ENCODE measurements at regions of chr10 and their contacts with region 1.

Region 1: GRCh38 chr10:12129222-12130111 is at the start of gene SEC61A2:
- DNase-seq: peak; percentile 71 to 96
- H3K4me3 ChIP-seq: peak within 1 kb of the TSS; percentile 67 to 97
- H3K27ac ChIP-seq: peak within 1 kb of the TSS; percentile 78 to 84
- H3K4me1 ChIP-seq: peaks cover 0 to 2% of the 10 kb centered on the region in 2 donors
- H3K27me3 ChIP-seq: no peaks in the 10 kb centered on the region
- CTCF ChIP-seq: no peak
- total RNA-seq, gene SEC61A2: 1.9 TPM

Region 2: GRCh38 chr10:12042797-12043651 is 86.4 kb before region 1 on chr10 and contains the start of gene UPF2:
- intact Hi-C with region 1: loop called (anchors 1 kb)
- DNase-seq: peak; percentile 95 to 99
- H3K4me3 ChIP-seq: peak within 1 kb of the TSS; percentile 91 to 95
- H3K27ac ChIP-seq: peak within 1 kb of the TSS; percentile 91 to 93
- H3K4me1 ChIP-seq: peaks cover 0 to 2% of the 10 kb centered on the region in 2 donors
- H3K27me3 ChIP-seq: no peaks in the 10 kb centered on the region
- CTCF ChIP-seq: no peak
- total RNA-seq, gene UPF2: 7.9 TPM

Region 3: GRCh38 chr10:12068449-12069269 is 60.8 kb before region 1 on chr10 and contains the start of gene DHTKD1:
- intact Hi-C with region 1: loop called (anchors 1 kb)
- DNase-seq: peak; percentile 93 to 99
- H3K4me3 ChIP-seq: peak within 1 kb of the TSS; percentile 72 to 90
- H3K27ac ChIP-seq: peak within 1 kb of the TSS; percentile 72 to 85
- H3K4me1 ChIP-seq: peaks cover 0 to 3% of the 10 kb centered on the region in 2 donors
- H3K27me3 ChIP-seq: no peaks in the 10 kb centered on the region
- CTCF ChIP-seq: peak; percentile 21 to 63 (median 43)
- total RNA-seq, gene DHTKD1: 12.6 TPM

Region 4: GRCh38 chr10:12195603-12196506 is 66.4 kb after region 1 on chr10 and contains the starts of genes CDC123 and NUDT5:
- intact Hi-C with region 1: loop called (anchors 2 kb)
- DNase-seq: peak; percentile 36 to 91
- H3K4me3 ChIP-seq: peak within 1 kb of the TSS; percentile 71 to 89
- H3K27ac ChIP-seq: peak within 1 kb of the TSS; percentile 88 to 92
- H3K4me1 ChIP-seq: peaks cover 9 to 27% of the 10 kb centered on the region in 2 donors
- H3K27me3 ChIP-seq: no peaks in the 10 kb centered on the region
- CTCF ChIP-seq: peak in 1 of 3 experiments; percentile 7
- total RNA-seq, gene CDC123: 33.2 TPM
- total RNA-seq, gene NUDT5: 10.2 TPM

Region 5: GRCh38 chr10:12489806-12490205 is 360.3 kb after region 1 on chr10:
- intact Hi-C with region 1: no loop called
- DNase-seq: no peak
- H3K4me3 ChIP-seq: no peak overlapping the region
- H3K27ac ChIP-seq: no peak overlapping the region
- H3K4me1 ChIP-seq: peaks cover 3 to 10% of the 10 kb centered on the region in 2 donors
- H3K27me3 ChIP-seq: no peaks in the 10 kb centered on the region
- CTCF ChIP-seq: no peak